ENCODE measurements at regions of chr6 and their contacts with region 1.

Region 1: DNA sequence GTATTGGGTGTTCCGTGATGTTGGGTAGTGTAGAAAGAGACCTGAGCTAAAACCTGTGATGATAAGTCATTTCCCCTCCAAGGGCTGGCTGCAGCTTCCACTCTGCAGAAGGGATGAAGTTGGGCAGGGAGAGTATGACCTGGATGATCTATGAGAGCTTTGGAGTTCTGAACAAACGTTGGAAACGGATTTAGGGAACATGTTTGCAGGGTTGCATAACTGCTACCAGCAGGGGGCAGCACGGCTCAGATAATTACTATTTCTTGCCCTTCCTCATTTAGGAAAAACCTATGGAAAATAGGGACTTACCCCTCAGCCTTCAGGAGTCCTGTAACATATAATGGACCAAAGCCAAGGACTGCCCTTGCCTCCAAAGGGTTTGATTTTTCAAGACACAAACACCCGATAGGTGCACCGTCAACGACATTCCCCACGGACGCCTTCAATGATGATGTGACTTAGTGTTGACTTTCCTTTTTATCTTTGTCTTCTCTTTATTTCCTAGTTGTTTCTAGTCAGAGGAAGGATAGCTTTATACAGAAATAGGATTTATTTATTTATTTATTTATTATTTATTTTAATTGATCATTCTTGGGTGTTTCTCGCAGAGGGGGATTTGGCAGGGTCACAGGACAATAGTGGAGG is 164.9 kb upstream of the SASH1 start:
- DNase-seq: peak; percentile 37
- H3K4me3 Mint-ChIP-seq: no peak overlapping the region
- H3K27ac Mint-ChIP-seq: no peak overlapping the region
- H3K4me1 Mint-ChIP-seq: no peaks in the 10 kb centered on the region
- H3K27me3 Mint-ChIP-seq: peaks cover 13% of the 10 kb centered on the region

Region 2: DNA sequence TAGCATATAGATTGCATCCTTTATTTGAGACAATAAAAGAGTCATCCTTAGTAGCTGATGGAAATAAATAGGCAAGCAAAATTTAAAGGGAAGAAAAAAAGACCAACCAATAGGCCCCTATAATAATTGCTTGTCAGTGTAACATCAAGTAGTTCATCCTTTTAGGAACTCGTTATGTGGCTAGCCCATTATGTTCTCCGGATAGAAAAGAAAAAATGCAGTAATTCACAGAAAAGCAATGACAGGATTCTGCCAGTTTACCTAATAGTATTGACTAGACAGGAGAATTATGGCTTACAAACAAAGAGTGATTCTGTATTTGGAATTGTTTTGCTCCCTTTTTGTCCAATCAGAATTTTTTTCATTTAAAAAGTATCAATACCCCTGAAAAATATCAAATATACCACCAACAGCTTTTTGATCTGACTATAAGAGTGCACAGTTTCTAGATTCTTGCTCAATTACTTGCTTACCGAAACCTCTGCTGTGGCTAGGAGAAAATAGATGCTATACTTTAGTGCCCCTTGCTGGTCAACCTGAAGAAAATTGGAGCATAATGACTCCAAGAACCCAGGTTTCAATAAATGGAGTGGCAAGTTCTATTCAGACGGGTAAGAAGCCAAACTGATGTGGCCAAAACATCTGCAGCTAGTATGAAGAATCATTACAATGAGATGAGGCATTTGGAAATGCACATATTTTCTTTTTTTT is 73.4 kb after region 1 on chr6:
- CTCF ChIA-PET with region 1: interaction called, 27 read pairs
- DNase-seq: no peak
- H3K4me3 Mint-ChIP-seq: no peak overlapping the region
- H3K27ac Mint-ChIP-seq: no peak overlapping the region
- H3K4me1 Mint-ChIP-seq: no peaks in the 10 kb centered on the region
- H3K27me3 Mint-ChIP-seq: peaks cover 4% of the 10 kb centered on the region

Region 3: GRCh38 chr6:148464319-148465010 is 286.8 kb after region 1 on chr6:
- CTCF ChIA-PET with region 1: interaction called, 30 read pairs
- DNase-seq: peak; percentile 71
- H3K4me3 Mint-ChIP-seq: no peak overlapping the region
- H3K27ac Mint-ChIP-seq: no peak overlapping the region
- H3K4me1 Mint-ChIP-seq: no peaks in the 10 kb centered on the region
- H3K27me3 Mint-ChIP-seq: peaks cover 20% of the 10 kb centered on the region

Measured in activated naive CD4-positive, alpha-beta T cell treated with anti-CD3 and anti-CD28 coated beads, Interleukin-2, amount 10 ng/mL, durations not matched to agents 7 days and 5 days (primary cell).